CD4-positive, alpha-beta T cell (primary cell): ENCODE measurements at regions of chr1 and their contacts with region 1.

Region 1: DNA sequence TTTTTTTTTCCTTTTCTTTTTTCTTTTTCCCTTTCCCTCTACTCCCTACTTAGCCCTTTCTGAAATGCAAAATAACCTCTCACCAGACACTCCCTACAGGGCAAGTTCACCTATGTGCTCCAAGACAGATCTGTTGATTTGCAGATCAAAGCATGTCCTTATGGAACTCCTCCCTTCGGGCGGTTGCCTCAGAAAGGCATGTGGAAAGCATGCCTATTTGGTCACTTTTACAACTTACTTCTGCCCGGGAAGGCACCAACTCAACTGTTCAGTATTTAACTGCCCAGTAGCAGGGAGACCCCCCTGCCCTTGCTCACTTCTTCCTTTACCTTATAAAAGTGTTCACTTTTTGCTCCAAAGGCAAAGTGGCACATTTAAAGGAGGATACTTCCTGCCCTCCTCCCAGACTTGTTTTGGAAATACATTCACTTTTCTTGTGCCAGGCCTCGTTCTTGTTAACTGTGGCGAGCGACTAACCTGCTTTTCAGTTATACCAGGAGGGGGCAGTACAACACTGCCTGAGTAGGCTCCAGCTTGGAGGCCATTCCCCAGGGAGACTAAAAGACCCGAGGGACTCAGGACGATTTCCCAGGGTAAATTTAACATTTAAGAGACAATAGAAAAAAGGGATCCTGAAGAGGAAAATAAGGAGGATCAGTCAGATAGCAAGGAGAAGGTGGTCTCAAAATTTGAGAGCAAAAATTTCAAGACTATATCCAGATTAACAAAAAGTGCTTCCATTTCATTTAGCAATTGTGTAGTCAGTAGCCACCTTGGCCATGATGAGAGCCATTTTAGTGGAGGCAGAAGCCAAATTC is 12.3 kb upstream of the SLAMF7 start:
- DNase-seq: peak; percentile 24 to 87 (median 52)
- ATAC-seq: peak; percentile 89
- H3K4me3 ChIP-seq: no peak overlapping the region
- H3K4me3 Mint-ChIP-seq: no peak overlapping the region
- H3K27ac ChIP-seq: no peak overlapping the region
- H3K27ac Mint-ChIP-seq: no peak overlapping the region
- H3K4me1 ChIP-seq: peaks cover 16% of the 10 kb centered on the region
- H3K4me1 Mint-ChIP-seq: peaks cover 14% of the 10 kb centered on the region
- H3K27me3 ChIP-seq: no peaks in the 10 kb centered on the region
- H3K27me3 Mint-ChIP-seq: no peaks in the 10 kb centered on the region
- CTCF ChIP-seq: peak; percentile 94

Region 2: GRCh38 chr1:160416369-160416768 is 310.3 kb before region 1 on chr1:
- CTCF ChIA-PET with region 1: no interaction called
- POLR2A ChIA-PET with region 1: no interaction called
- intact Hi-C with region 1: no loop called
- DNase-seq: no peak
- ATAC-seq: no peak
- H3K4me3 ChIP-seq: no peak overlapping the region
- H3K4me3 Mint-ChIP-seq: no peak overlapping the region
- H3K27ac ChIP-seq: no peak overlapping the region
- H3K27ac Mint-ChIP-seq: no peak overlapping the region
- H3K4me1 ChIP-seq: no peaks in the 10 kb centered on the region
- H3K4me1 Mint-ChIP-seq: no peaks in the 10 kb centered on the region
- H3K27me3 ChIP-seq: peaks cover 0 to 3% of the 10 kb centered on the region in 2 experiments
- H3K27me3 Mint-ChIP-seq: no peaks in the 10 kb centered on the region
- CTCF ChIP-seq: no peak

Region 3: DNA sequence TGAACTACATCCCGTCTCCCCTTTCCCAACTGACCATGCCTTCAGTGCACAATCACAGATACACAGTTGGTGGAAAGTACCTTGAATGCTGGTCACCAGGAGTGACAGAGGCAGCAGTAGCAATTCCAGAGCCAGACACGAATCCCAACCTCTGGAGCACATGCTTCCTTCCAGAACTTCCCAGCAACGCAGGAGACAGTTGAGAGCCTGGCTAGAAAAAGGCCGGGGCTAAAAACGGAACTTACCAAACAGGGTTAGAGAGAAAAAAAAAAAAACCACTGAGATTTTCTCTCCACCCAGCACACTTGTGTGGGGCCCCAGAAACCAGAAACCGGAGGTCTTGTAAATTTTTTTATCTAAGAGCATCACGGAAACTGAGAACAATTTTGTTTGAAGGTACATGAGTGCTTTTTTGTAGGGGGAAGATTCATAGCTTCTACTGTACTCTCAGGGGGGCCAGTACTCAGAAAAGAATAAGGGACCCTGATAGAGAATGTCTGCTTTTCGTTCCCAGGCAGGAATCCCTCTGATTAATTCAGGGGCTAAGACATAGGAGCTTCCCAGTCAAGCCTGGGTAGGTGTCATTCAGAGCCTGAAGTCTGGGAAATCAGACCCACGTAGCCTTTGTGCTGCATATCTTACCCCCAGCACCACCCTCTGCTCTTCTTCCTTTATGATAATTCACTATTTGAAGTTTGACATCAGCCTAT is 14.9 kb before region 1 on chr1 and contains the start of gene CD48:
- CTCF ChIA-PET with region 1: interaction called, 13 read pairs
- POLR2A ChIA-PET with region 1: interaction called, 13 read pairs
- intact Hi-C with region 1: no loop called
- DNase-seq: peak in 11 of 14 experiments; percentile 26 to 88 (median 50)
- ATAC-seq: peak; percentile 52
- H3K4me3 ChIP-seq: peak within 1 kb of the TSS; percentile 73
- H3K4me3 Mint-ChIP-seq: no peak within 1 kb of the TSS
- H3K27ac ChIP-seq: peak within 1 kb of the TSS; percentile 86 to 93
- H3K27ac Mint-ChIP-seq: no peak within 1 kb of the TSS
- H3K4me1 ChIP-seq: peaks cover 52% of the 10 kb centered on the region
- H3K4me1 Mint-ChIP-seq: peaks cover 50% of the 10 kb centered on the region
- H3K27me3 ChIP-seq: no peaks in the 10 kb centered on the region
- H3K27me3 Mint-ChIP-seq: no peaks in the 10 kb centered on the region
- CTCF ChIP-seq: no peak
- total RNA-seq, gene CD48: 387 to 395 TPM

Region 4: GRCh38 chr1:160830321-160831153 is 103.8 kb after region 1 on chr1:
- CTCF ChIA-PET with region 1: interaction called, 9 read pairs
- POLR2A ChIA-PET with region 1: interaction called, 3 read pairs
- intact Hi-C with region 1: loop called (anchors 1 kb)
- DNase-seq: peak; percentile 67 to 89 (median 76)
- ATAC-seq: peak; percentile 84
- H3K4me3 ChIP-seq: no peak overlapping the region
- H3K4me3 Mint-ChIP-seq: no peak overlapping the region
- H3K27ac ChIP-seq: no peak overlapping the region
- H3K27ac Mint-ChIP-seq: peak overlapping the region; percentile 81
- H3K4me1 ChIP-seq: peaks cover 17% of the 10 kb centered on the region
- H3K4me1 Mint-ChIP-seq: peaks cover 35% of the 10 kb centered on the region
- H3K27me3 ChIP-seq: no peaks in the 10 kb centered on the region
- H3K27me3 Mint-ChIP-seq: no peaks in the 10 kb centered on the region
- CTCF ChIP-seq: peak; percentile 87

Region 5: GRCh38 chr1:160877221-160877620 is 150.5 kb after region 1 on chr1:
- CTCF ChIA-PET with region 1: interaction called, 4 read pairs
- POLR2A ChIA-PET with region 1: no interaction called
- intact Hi-C with region 1: loop called (anchors 2 kb)
- DNase-seq: peak in 4 of 14 experiments; percentile 15 to 71 (median 70)
- ATAC-seq: peak; percentile 84
- H3K4me3 ChIP-seq: no peak overlapping the region
- H3K4me3 Mint-ChIP-seq: no peak overlapping the region
- H3K27ac ChIP-seq: no peak overlapping the region
- H3K27ac Mint-ChIP-seq: no peak overlapping the region
- H3K4me1 ChIP-seq: peaks cover 12% of the 10 kb centered on the region
- H3K4me1 Mint-ChIP-seq: peaks cover 13% of the 10 kb centered on the region
- H3K27me3 ChIP-seq: no peaks in the 10 kb centered on the region
- H3K27me3 Mint-ChIP-seq: no peaks in the 10 kb centered on the region
- CTCF ChIP-seq: peak; percentile 63

Region 6: DNA sequence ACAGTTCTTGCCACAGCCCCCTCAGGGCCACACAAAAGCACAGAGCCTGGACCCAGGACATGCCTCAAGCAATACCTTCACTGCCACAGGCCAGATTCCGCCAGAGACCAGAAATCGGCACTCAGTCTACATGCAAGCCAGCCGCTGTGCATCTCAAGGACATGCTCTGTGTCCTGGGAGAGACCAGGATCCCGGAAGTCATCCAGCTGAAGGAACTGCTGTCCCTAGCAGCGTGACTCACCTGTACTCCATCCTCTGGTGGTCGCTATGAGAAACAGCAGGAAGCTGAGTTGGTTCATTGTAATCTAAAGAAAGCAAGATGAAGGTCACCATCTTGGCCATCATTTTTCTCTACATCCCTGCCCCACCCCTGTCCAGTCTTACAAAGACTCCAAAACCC is 157.9 kb after region 1 on chr1:
- CTCF ChIA-PET with region 1: interaction called, 3 read pairs
- POLR2A ChIA-PET with region 1: no interaction called
- intact Hi-C with region 1: loop called (anchors 2 kb)
- DNase-seq: peak in 1 of 14 experiments; percentile 72
- ATAC-seq: peak; percentile 78
- H3K4me3 ChIP-seq: no peak overlapping the region
- H3K4me3 Mint-ChIP-seq: no peak overlapping the region
- H3K27ac ChIP-seq: no peak overlapping the region
- H3K27ac Mint-ChIP-seq: no peak overlapping the region
- H3K4me1 ChIP-seq: peaks cover 9% of the 10 kb centered on the region
- H3K4me1 Mint-ChIP-seq: peaks cover 5% of the 10 kb centered on the region
- H3K27me3 ChIP-seq: peaks cover 0 to 4% of the 10 kb centered on the region in 2 experiments
- H3K27me3 Mint-ChIP-seq: peaks cover 4% of the 10 kb centered on the region
- CTCF ChIP-seq: peak; percentile 71

Region 7: GRCh38 chr1:160951443-160952128 is 224.9 kb after region 1 on chr1:
- CTCF ChIA-PET with region 1: interaction called, 16 read pairs
- POLR2A ChIA-PET with region 1: no interaction called
- intact Hi-C with region 1: loop called (anchors 1 kb)
- DNase-seq: peak; percentile 52 to 84 (median 66)
- ATAC-seq: peak; percentile 91
- H3K4me3 ChIP-seq: no peak overlapping the region
- H3K4me3 Mint-ChIP-seq: no peak overlapping the region
- H3K27ac ChIP-seq: no peak overlapping the region
- H3K27ac Mint-ChIP-seq: no peak overlapping the region
- H3K4me1 ChIP-seq: peaks cover 10% of the 10 kb centered on the region
- H3K4me1 Mint-ChIP-seq: peaks cover 12% of the 10 kb centered on the region
- H3K27me3 ChIP-seq: no peaks in the 10 kb centered on the region
- H3K27me3 Mint-ChIP-seq: no peaks in the 10 kb centered on the region
- CTCF ChIP-seq: peak; percentile 68